A673 (cell line): ENCODE measurements at regions of chr3 and their contacts with region 1.

Region 1: DNA sequence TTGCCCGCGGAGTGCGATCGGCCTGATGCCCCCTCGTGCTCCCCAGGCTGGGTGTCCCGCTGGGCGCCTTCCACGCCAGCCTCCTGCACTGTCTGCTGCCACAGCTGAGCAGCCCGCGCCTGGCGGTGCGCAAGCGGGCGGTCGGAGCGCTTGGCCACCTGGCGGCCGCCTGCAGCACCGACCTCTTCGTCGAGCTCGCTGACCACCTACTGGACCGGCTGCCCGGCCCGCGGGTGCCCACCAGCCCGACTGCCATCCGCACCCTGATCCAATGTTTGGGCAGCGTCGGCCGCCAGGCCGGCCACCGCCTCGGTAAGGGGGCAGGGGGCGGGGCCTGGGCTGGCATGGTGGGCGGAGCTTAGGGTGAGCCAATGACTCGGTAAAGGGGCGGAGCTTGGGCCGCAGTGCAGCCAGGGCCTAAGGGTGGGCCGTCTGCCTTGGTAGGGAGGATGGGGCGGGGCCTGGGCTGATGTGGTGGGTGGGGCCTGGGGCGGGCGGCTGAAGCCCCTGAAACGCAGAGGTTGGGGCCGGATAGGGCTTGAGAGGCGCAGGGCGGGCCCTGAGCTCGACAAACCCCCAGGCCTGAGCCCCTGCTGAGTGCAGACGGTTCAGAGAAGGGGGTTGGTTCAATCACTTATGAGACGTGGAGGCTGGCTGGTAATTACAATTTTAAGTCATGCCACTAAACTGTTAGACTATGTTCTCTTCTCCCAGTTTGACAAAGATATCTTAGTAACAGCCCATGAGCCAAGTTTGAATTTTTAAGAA is 13.7 kb downstream of the CAND2 start:
- DNase-seq: peak; percentile 96
- H3K4me3 ChIP-seq: peak overlapping the region; percentile 57
- H3K27ac ChIP-seq: peak overlapping the region; percentile 15
- H3K4me1 ChIP-seq: peaks cover 6% of the 10 kb centered on the region
- H3K27me3 ChIP-seq: no peaks in the 10 kb centered on the region
- CTCF ChIP-seq: peak; percentile 74

Region 2: GRCh38 chr3:12830785-12831156 is 20.6 kb after region 1 on chr3:
- CTCF ChIA-PET with region 1: interaction called, 12 read pairs
- POLR2A ChIA-PET with region 1: interaction called, 3 read pairs
- intact Hi-C with region 1: no loop called
- DNase-seq: no peak
- H3K4me3 ChIP-seq: no peak overlapping the region
- H3K27ac ChIP-seq: peak overlapping the region; percentile 46
- H3K4me1 ChIP-seq: no peaks in the 10 kb centered on the region
- H3K27me3 ChIP-seq: no peaks in the 10 kb centered on the region
- CTCF ChIP-seq: peak; percentile 28; the same call in 1 of the 2 replicates

Region 3: DNA sequence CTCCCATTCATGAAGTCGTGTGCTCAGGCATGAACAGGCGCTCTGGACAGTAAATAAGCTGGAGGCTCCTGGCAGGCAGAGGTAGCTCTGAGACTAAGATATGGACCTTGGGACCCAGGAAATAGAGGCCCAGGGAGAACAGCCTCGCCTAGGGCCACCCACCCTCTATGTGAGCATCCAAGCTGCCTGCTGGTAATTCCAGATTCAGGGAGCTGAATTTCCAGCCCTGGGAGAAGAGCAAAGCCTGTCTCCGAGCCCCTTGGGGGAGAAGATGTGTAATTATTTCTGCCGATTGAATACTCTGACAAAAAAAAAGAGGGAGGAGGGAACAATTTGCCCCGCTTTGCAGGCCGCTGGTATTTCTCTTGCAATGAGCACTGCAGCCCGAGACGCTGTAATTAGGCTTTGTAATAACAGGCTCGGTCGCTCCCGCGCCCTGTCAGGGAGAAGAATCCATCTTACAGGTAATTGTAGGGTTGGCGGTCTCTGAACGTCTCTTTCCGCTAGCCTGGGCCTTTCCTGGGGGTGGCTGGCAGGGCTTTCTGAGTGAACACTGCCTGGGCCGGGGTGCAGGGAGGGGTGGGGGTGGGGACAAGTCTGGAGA is 938.2 kb after region 1 on chr3:
- CTCF ChIA-PET with region 1: no interaction called
- POLR2A ChIA-PET with region 1: no interaction called
- intact Hi-C with region 1: no loop called
- DNase-seq: no peak
- H3K4me3 ChIP-seq: no peak overlapping the region
- H3K27ac ChIP-seq: no peak overlapping the region
- H3K4me1 ChIP-seq: no peaks in the 10 kb centered on the region
- H3K27me3 ChIP-seq: no peaks in the 10 kb centered on the region
- CTCF ChIP-seq: no peak